Sigmoid colon (tissue), 7 donors: ENCODE measurements at regions of chr17 and their contacts with region 1.

Region 1: GRCh38 chr17:10705727-10706126 is 8.3 kb downstream of the ADPRM start:
- DNase-seq: no peak
- H3K4me3 ChIP-seq: no peak overlapping the region
- H3K27ac ChIP-seq: no peak overlapping the region
- H3K4me1 ChIP-seq: peaks cover 0 to 6% (median 0%) of the 10 kb centered on the region in 4 donors
- H3K27me3 ChIP-seq: no peaks in the 10 kb centered on the region
- CTCF ChIP-seq: no peak
- EP300 ChIP-seq: no peak
- POLR2A ChIP-seq: no peak

Region 2: GRCh38 chr17:10661437-10661836 is 44.3 kb before region 1 on chr17:
- intact Hi-C with region 1: no loop called
- DNase-seq: no peak
- H3K4me3 ChIP-seq: no peak overlapping the region
- H3K27ac ChIP-seq: no peak overlapping the region
- H3K4me1 ChIP-seq: no peaks in the 10 kb centered on the region
- H3K27me3 ChIP-seq: no peaks in the 10 kb centered on the region
- CTCF ChIP-seq: no peak
- EP300 ChIP-seq: no peak
- POLR2A ChIP-seq: no peak

Region 3: DNA sequence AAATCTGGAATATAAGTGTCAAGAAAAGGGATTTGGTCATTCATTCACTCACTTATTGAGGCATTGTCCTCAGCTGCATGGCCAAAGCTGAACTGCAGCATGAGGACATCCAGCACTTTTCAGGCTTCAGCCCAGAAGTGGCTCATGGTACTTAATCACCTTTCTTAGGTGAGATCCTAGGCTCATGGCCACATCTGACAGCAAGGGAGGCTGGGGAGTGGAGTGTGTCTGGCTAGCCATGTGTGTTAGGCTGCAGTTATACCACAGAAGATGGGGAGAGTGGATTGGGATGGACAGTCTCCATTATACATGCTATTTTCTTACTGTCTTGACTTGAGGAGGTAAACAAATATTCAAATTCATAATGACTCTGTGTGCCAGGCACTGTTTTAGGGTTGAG is 604.1 kb after region 1 on chr17:
- intact Hi-C with region 1: loop called (anchors 5 kb)
- DNase-seq: no peak
- H3K4me3 ChIP-seq: no peak overlapping the region
- H3K27ac ChIP-seq: no peak overlapping the region
- H3K4me1 ChIP-seq: peaks cover 0 to 3% (median 1%) of the 10 kb centered on the region in 4 donors
- H3K27me3 ChIP-seq: no peaks in the 10 kb centered on the region
- CTCF ChIP-seq: no peak
- EP300 ChIP-seq: no peak
- POLR2A ChIP-seq: no peak